ENCODE measurements at regions of chr12 and their contacts with region 1.

Region 1: DNA sequence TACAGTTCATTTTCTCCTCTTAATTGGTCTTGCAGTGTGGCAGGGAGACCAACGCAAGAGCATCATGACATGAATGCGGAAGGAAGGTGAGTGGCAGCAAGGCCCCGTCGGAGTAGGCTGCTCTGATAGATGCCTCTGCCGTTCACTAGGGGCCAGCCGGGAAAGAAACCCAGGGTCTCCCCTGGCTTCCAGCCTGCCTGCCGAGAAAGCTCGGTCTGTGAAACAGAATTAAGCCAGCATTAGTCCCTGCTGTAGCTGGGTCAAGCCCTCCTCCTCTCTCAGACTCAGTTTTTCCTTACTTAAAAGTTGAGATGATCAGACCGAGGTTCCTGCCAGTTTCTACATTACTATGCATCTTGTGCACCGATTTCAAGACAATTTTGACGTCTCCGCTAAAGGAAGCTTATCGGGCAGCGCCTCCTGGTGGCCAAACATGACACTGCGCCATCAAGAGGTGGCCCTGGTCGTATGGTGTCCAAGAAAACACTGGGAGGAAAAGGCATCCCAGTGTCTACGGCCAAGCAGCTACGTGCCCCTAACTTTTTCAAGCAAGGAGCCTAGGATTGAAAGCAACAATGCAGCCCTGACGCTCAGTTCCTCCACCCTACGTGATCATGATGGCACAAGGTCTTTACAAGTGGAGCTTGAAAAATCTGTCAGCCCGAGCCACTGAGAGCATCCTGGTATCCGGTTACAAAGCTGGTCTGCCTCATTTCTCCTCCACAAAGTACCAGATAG is 131.6 kb downstream of the KSR2 start:
- DNase-seq: peak in 1 of 2 donors; percentile 82
- H3K4me3 ChIP-seq: no peak overlapping the region
- H3K27ac ChIP-seq: no peak overlapping the region
- H3K4me1 ChIP-seq: no peaks in the 10 kb centered on the region
- H3K27me3 ChIP-seq: no peaks in the 10 kb centered on the region
- CTCF ChIP-seq: peak; percentile 59 to 87 (median 80)

Region 2: GRCh38 chr12:117165342-117165741 is 671.8 kb before region 1 on chr12:
- intact Hi-C with region 1: no loop called
- DNase-seq: no peak
- H3K4me3 ChIP-seq: no peak overlapping the region
- H3K27ac ChIP-seq: no peak overlapping the region
- H3K4me1 ChIP-seq: no peaks in the 10 kb centered on the region
- H3K27me3 ChIP-seq: no peaks in the 10 kb centered on the region
- CTCF ChIP-seq: no peak

Region 3: GRCh38 chr12:117212563-117213190 is 624.5 kb before region 1 on chr12:
- intact Hi-C with region 1: loop called (anchors 1 kb)
- DNase-seq: peak in 1 of 2 donors; percentile 81
- H3K4me3 ChIP-seq: no peak overlapping the region
- H3K27ac ChIP-seq: no peak overlapping the region
- H3K4me1 ChIP-seq: no peaks in the 10 kb centered on the region
- H3K27me3 ChIP-seq: no peaks in the 10 kb centered on the region
- CTCF ChIP-seq: peak; percentile 59 to 89 (median 77)

Region 4: GRCh38 chr12:117367011-117367638 is 470.0 kb before region 1 on chr12:
- intact Hi-C with region 1: loop called (anchors 2 kb)
- DNase-seq: peak in 1 of 2 donors; percentile 71
- H3K4me3 ChIP-seq: no peak overlapping the region
- H3K27ac ChIP-seq: no peak overlapping the region
- H3K4me1 ChIP-seq: no peaks in the 10 kb centered on the region
- H3K27me3 ChIP-seq: no peaks in the 10 kb centered on the region
- CTCF ChIP-seq: peak; percentile 29 to 79 (median 59)